ENCODE measurements at regions of chr22 and their contacts with region 1.

Region 1: DNA sequence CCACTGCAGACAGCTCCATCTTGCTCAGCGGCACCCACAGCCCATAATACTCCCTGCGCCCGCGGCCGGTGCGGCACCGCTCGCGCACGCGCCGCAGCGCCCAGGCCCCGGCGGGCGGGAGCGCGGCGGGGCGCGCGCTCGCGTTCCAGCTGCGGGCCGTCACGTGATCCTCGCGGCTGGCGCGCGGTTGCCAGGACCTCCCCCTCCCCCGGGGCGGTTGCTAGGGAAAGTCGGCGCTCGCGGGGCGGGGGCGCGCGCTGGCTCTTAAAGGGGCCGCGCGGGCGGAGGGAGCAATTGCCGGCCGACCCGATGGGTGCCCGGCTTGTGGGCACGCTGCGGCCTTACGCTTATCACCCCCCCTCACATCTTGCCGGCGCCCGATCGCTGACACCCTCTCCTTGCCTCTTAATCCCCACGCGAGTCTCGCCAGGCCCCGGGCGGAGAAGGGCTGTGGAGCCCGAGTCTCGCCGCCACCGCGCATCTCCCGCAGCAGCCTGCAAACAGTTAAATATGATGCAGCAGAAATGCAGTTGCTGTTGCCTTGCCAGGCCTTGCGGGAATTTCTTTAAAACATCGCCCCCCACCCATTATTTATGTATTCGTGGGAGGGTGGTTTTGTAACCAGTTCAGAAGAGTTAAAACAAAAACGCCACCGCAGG is at the start of gene CBX6:
- DNase-seq: peak; percentile 78
- H3K4me3 Mint-ChIP-seq: peak within 1 kb of the TSS; percentile 82
- H3K27ac Mint-ChIP-seq: peak within 1 kb of the TSS; percentile 35
- H3K4me1 Mint-ChIP-seq: peaks cover 21% of the 10 kb centered on the region
- H3K27me3 Mint-ChIP-seq: peaks cover 52% of the 10 kb centered on the region
- CTCF ChIP-seq: no peak
- total RNA-seq, gene CBX6: 22.9 and 42.1 TPM in 2 replicates

Region 2: GRCh38 chr22:38850941-38851849 is 21.1 kb before region 1 on chr22:
- CTCF ChIA-PET with region 1: interaction called, 15 read pairs
- POLR2A ChIA-PET with region 1: interaction called, 3 read pairs
- intact Hi-C with region 1: no loop called
- DNase-seq: peak; percentile 70
- H3K4me3 Mint-ChIP-seq: no peak overlapping the region
- H3K27ac Mint-ChIP-seq: no peak overlapping the region
- H3K4me1 Mint-ChIP-seq: peaks cover 7% of the 10 kb centered on the region
- H3K27me3 Mint-ChIP-seq: peaks cover 34% of the 10 kb centered on the region
- CTCF ChIP-seq: no peak

Region 3: GRCh38 chr22:38950527-38951295 is 78.4 kb after region 1 on chr22:
- CTCF ChIA-PET with region 1: interaction called, 16 read pairs
- POLR2A ChIA-PET with region 1: no interaction called
- intact Hi-C with region 1: no loop called
- DNase-seq: no peak
- H3K4me3 Mint-ChIP-seq: no peak overlapping the region
- H3K27ac Mint-ChIP-seq: no peak overlapping the region
- H3K4me1 Mint-ChIP-seq: peaks cover 9% of the 10 kb centered on the region
- H3K27me3 Mint-ChIP-seq: peaks cover 66% of the 10 kb centered on the region
- CTCF ChIP-seq: no peak

Region 4: GRCh38 chr22:39003165-39003638 is 130.9 kb after region 1 on chr22:
- CTCF ChIA-PET with region 1: interaction called, 65 read pairs
- POLR2A ChIA-PET with region 1: no interaction called
- intact Hi-C with region 1: loop called (anchors 1 kb)
- DNase-seq: peak; percentile 87
- H3K4me3 Mint-ChIP-seq: no peak overlapping the region
- H3K27ac Mint-ChIP-seq: no peak overlapping the region
- H3K4me1 Mint-ChIP-seq: no peaks in the 10 kb centered on the region
- H3K27me3 Mint-ChIP-seq: peaks cover 20% of the 10 kb centered on the region
- CTCF ChIP-seq: peak; percentile 66

Region 5: GRCh38 chr22:39117585-39118191 is 245.4 kb after region 1 on chr22:
- CTCF ChIA-PET with region 1: interaction called, 29 read pairs
- POLR2A ChIA-PET with region 1: interaction called, 6 read pairs
- intact Hi-C with region 1: loop called (anchors 2 kb)
- DNase-seq: peak; percentile 71
- H3K4me3 Mint-ChIP-seq: no peak overlapping the region
- H3K27ac Mint-ChIP-seq: no peak overlapping the region
- H3K4me1 Mint-ChIP-seq: no peaks in the 10 kb centered on the region
- H3K27me3 Mint-ChIP-seq: no peaks in the 10 kb centered on the region
- CTCF ChIP-seq: peak; percentile 41

Measured in MCF 10A (cell line).